Transverse colon (tissue), 4 donors: ENCODE measurements at regions of chr17 and their contacts with region 1.

Region 1: GRCh38 chr17:13222949-13223348 is 205.1 kb upstream of the ELAC2 start:
- DNase-seq: no peak
- H3K4me3 ChIP-seq: no peak overlapping the region
- H3K27ac ChIP-seq: no peak overlapping the region
- H3K4me1 ChIP-seq: no peaks in the 10 kb centered on the region
- H3K27me3 ChIP-seq: no peaks in the 10 kb centered on the region
- CTCF ChIP-seq: no peak
- EP300 ChIP-seq: no peak
- POLR2A ChIP-seq: no peak

Region 2: GRCh38 chr17:13306310-13306962 is 83.5 kb after region 1 on chr17:
- in situ Hi-C with region 1: loop called in 1 of 4 experiments (anchors 25 kb)
- intact Hi-C with region 1: no loop called
- DNase-seq: no peak
- H3K4me3 ChIP-seq: no peak overlapping the region
- H3K27ac ChIP-seq: no peak overlapping the region
- H3K4me1 ChIP-seq: no peaks in the 10 kb centered on the region
- H3K27me3 ChIP-seq: no peaks in the 10 kb centered on the region
- CTCF ChIP-seq: peak; percentile 14 to 31 (median 27)
- EP300 ChIP-seq: no peak
- POLR2A ChIP-seq: no peak